ENCODE measurements at regions of chr19 and their contacts with region 1.

Region 1: DNA sequence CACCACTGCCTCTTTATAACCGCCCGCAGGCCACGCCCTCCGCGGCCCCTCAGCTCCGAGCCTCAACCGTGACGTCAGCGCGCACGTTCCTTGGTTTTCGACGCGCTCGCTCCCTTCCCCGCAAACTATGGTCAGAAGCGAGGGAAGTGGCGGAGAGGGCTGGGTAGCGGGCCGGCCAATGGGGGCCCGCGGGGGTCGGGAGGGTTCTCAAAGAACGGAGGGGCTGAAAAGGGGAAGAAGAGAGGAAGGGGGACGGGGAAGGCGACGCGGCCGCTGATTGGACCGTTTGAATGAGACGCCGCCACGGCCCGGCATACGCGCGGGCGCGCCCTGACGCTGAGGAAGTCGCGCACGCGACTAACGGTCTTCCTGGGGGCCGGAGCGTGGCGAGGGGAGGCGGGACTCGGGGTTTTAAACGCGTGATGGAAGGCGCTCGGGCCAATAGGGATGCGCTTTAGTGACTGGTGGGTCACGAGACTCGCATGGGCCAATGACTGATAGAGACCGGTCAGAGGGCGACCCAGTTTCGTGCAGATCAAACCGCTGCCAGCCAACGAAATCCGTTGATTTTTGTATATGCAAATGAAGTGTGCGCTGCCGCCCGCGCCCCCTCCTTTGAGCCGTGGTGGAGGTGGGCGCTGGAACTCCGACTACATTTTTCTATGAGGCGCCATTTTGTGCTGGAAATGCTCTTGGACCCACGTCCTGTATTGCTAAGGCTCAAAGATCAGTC is 378 bp upstream of the UBE2S start:
- DNase-seq: peak; percentile 97 to 100 (median 98)
- ATAC-seq: peak; percentile 97
- H3K4me3 ChIP-seq: peak overlapping the region; percentile 98
- H3K27ac ChIP-seq: peak overlapping the region; percentile 100
- H3K4me1 ChIP-seq: peaks cover 19 to 38% of the 10 kb centered on the region in 2 experiments
- H3K27me3 ChIP-seq: no peaks in the 10 kb centered on the region
- CTCF ChIP-seq: no peak
- EP300 ChIP-seq: peak; percentile 30
- POLR2A ChIP-seq: peak; percentile 59; the same call in 1 of the 2 replicates
- RAD21 ChIP-seq: no peak

Region 2: GRCh38 chr19:55258828-55259539 is 149.0 kb before region 1 on chr19 and contains the start of gene PPP6R1:
- CTCF ChIA-PET with region 1: no interaction called
- POLR2A ChIA-PET with region 1: interaction called, 34 read pairs
- in situ Hi-C with region 1: no loop called
- intact Hi-C with region 1: no loop called
- DNase-seq: peak; percentile 97 to 99 (median 98)
- ATAC-seq: peak; percentile 90
- H3K4me3 ChIP-seq: peak within 1 kb of the TSS; percentile 94
- H3K27ac ChIP-seq: peak within 1 kb of the TSS; percentile 97
- H3K4me1 ChIP-seq: peaks cover 34 to 53% of the 10 kb centered on the region in 2 experiments; a peak in 4 of 5 replicates
- H3K27me3 ChIP-seq: no peaks in the 10 kb centered on the region
- CTCF ChIP-seq: no peak
- EP300 ChIP-seq: peak; percentile 86
- POLR2A ChIP-seq: peak; percentile 92
- RAD21 ChIP-seq: peak; percentile 53 to 57
- polyA plus RNA-seq, gene PPP6R1: 0.48 to 0.89 TPM

Region 3: DNA sequence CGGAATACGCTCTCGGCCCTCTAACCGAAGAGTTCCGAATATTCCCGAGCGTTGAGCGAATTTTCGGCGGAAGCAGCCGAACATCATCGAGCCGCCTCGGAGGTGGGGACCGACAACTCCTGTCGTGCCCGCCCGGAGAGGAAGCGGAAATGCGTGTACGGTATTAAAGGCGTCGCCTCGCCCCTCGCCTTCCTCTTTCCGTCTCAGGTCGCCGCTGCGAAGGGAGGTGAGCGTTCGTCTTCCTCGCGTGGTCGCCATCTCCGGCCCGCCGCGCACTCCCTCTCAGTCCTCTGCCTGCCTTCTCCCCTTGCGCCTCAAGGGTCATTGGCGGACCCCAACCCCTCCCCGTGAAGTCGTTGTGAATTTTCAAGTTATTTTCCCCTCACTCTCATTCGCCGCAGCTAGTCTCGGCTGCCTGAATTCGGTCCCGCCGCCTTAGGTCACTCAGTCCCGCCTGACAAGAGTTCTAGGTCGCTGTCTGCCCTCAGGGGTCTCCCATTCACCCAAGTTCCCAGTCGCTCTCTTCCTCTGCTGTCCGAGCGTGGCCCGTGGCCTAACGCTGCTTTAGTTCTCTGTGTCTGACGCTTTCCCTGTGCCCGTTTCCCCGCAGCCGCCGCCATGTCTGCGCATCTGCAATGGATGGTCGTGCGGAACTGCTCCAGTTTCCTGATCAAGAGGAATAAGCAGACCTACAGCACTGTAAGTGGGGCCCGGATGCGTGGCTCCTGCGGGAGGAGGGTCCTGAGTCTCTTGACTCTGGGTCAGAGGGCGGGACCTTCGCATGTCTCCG is 22.0 kb before region 1 on chr19 and contains the start of gene RPL28:
- CTCF ChIA-PET with region 1: no interaction called
- POLR2A ChIA-PET with region 1: interaction called, 195 read pairs
- in situ Hi-C with region 1: no loop called
- intact Hi-C with region 1: no loop called
- DNase-seq: peak; percentile 85 to 99 (median 91)
- ATAC-seq: peak; percentile 80
- H3K4me3 ChIP-seq: peak within 1 kb of the TSS; percentile 77
- H3K27ac ChIP-seq: peak within 1 kb of the TSS; percentile 97
- H3K4me1 ChIP-seq: peaks cover 54 to 66% of the 10 kb centered on the region in 2 experiments
- H3K27me3 ChIP-seq: no peaks in the 10 kb centered on the region
- CTCF ChIP-seq: no peak
- EP300 ChIP-seq: peak; percentile 3; the same call in 1 of the 2 replicates
- POLR2A ChIP-seq: peak; percentile 99
- RAD21 ChIP-seq: no peak
- polyA plus RNA-seq, gene RPL28: 257 to 287 TPM

Region 4: DNA sequence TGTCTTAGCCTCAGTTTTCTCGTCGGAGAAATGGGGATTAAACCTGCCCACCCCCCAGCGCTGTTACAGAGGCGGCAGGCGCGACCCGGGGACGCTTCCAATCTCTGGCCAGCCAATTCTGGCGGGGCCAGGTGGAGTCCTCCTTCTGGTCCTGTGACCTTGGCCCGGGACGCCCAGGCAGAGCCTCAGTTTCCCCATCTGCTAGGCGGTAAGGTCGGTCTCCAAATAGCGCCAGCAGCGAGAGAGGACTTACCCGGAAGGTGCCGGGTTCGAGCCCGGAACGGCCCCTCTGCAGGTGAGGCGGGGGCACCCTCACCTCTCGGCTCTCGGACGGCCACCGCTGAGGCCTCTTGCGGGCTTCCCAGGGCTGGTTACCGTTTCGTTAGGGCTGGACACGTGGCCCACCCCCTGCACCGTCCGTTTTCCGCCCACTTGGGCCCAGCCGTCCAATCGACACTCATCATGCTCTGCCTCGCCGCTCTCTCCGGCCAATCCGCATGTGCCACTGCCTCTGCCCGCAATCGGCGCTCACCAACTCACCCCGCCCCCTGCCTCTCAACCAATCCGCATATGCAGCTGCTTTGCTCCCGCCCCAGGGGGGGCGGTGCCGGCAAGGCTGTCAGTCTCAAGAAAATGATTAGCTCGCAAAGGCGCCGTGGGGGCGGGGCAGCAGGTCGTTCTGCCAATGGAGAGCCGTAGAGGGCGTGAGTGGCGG is 53.5 kb after region 1 on chr19 and contains the start of gene ISOC2:
- CTCF ChIA-PET with region 1: no interaction called
- POLR2A ChIA-PET with region 1: interaction called, 12 read pairs
- in situ Hi-C with region 1: no loop called
- intact Hi-C with region 1: no loop called
- DNase-seq: peak; percentile 95 to 100 (median 98)
- ATAC-seq: peak; percentile 96
- H3K4me3 ChIP-seq: peak within 1 kb of the TSS; percentile 81
- H3K27ac ChIP-seq: peak within 1 kb of the TSS; percentile 98
- H3K4me1 ChIP-seq: peaks cover 30 to 74% of the 10 kb centered on the region in 2 experiments
- H3K27me3 ChIP-seq: no peaks in the 10 kb centered on the region
- CTCF ChIP-seq: no peak; a peak in 1 of 6 replicates
- EP300 ChIP-seq: no peak
- POLR2A ChIP-seq: peak; percentile 95
- RAD21 ChIP-seq: no peak
- polyA plus RNA-seq, gene ISOC2: 1.2 to 6.2 TPM

Region 5: GRCh38 chr19:55503502-55504251 is 95.7 kb after region 1 on chr19:
- CTCF ChIA-PET with region 1: interaction called, 3 read pairs
- POLR2A ChIA-PET with region 1: interaction called, 10 read pairs
- in situ Hi-C with region 1: no loop called
- intact Hi-C with region 1: no loop called
- DNase-seq: peak; percentile 95 to 98 (median 98)
- ATAC-seq: peak; percentile 96
- H3K4me3 ChIP-seq: peak overlapping the region; percentile 27; the same call in 1 of the 2 replicates
- H3K27ac ChIP-seq: peak overlapping the region; percentile 61; the same call in 2 of the 3 replicates
- H3K4me1 ChIP-seq: peaks cover 12 to 29% of the 10 kb centered on the region in 2 experiments
- H3K27me3 ChIP-seq: no peaks in the 10 kb centered on the region; a peak in 1 of 5 replicates
- CTCF ChIP-seq: peak; percentile 91 to 95 (median 95)
- EP300 ChIP-seq: no peak
- POLR2A ChIP-seq: no peak
- RAD21 ChIP-seq: peak; percentile 93 to 95

Region 6: GRCh38 chr19:55563261-55563690 is 155.3 kb after region 1 on chr19:
- CTCF ChIA-PET with region 1: no interaction called
- POLR2A ChIA-PET with region 1: no interaction called
- in situ Hi-C with region 1: no loop called
- intact Hi-C with region 1: no loop called
- DNase-seq: no peak
- ATAC-seq: peak; percentile 44
- H3K4me3 ChIP-seq: no peak overlapping the region
- H3K27ac ChIP-seq: no peak overlapping the region
- H3K4me1 ChIP-seq: peaks cover 0 to 7% of the 10 kb centered on the region in 2 experiments; a peak in 2 of 5 replicates
- H3K27me3 ChIP-seq: peaks cover 5 to 7% of the 10 kb centered on the region in 2 experiments; a peak in 4 of 5 replicates
- CTCF ChIP-seq: no peak
- EP300 ChIP-seq: no peak
- POLR2A ChIP-seq: no peak
- RAD21 ChIP-seq: no peak

Measured in K562 (cell line).